ENCODE measurements at regions of chr1 and their contacts with region 1.

Region 1: DNA sequence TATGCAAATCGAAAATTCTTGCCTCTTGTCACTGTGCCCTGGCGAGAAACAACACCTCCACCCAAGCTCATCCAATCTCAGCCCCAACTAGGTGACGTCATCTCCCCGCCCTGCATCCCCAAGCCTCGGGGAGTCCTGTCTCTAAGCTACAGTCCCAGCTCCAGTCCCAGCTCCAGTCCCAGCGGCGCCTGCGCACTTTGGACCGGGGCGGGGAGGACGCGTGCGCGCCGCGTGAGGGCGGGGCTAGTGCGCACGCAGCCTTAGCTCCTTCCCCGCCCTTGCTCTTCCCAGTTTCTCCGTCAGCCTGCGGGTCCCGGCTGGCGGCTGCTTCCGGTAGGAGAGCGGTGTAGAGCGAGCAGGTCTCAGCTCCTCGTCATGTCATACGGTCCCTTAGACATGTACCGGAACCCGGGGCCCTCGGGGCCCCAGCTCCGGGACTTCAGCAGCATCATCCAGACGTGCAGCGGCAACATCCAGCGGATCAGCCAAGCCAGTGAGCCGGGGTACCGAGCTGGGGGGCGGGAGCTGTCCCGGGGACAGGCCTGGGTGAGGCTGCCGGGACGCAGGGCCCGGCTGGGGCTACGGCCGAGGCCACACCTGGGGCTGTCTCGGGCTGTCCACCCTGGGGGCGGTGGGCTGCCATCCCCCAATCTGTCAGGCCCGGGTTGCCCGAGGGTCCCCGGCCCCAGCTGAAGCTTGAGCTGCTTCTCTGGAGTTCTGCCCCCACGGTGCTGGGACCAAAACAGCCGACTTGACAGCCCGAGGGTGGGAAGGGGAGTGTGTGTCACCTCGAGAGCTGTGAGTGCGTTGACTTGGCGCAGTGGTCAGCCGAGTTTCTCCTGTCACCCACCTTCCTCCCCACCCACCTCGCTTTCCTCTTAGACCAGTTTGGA is at the start of gene STX12:
- DNase-seq: peak; percentile 100
- ATAC-seq: peak; percentile 97
- H3K4me3 Mint-ChIP-seq: peak within 1 kb of the TSS; percentile 98
- H3K27ac Mint-ChIP-seq: peak within 1 kb of the TSS; percentile 99
- H3K4me1 Mint-ChIP-seq: peaks cover 31% of the 10 kb centered on the region
- H3K27me3 Mint-ChIP-seq: no peaks in the 10 kb centered on the region
- total RNA-seq, gene STX12: 26.8 to 37.4 TPM

Region 2: DNA sequence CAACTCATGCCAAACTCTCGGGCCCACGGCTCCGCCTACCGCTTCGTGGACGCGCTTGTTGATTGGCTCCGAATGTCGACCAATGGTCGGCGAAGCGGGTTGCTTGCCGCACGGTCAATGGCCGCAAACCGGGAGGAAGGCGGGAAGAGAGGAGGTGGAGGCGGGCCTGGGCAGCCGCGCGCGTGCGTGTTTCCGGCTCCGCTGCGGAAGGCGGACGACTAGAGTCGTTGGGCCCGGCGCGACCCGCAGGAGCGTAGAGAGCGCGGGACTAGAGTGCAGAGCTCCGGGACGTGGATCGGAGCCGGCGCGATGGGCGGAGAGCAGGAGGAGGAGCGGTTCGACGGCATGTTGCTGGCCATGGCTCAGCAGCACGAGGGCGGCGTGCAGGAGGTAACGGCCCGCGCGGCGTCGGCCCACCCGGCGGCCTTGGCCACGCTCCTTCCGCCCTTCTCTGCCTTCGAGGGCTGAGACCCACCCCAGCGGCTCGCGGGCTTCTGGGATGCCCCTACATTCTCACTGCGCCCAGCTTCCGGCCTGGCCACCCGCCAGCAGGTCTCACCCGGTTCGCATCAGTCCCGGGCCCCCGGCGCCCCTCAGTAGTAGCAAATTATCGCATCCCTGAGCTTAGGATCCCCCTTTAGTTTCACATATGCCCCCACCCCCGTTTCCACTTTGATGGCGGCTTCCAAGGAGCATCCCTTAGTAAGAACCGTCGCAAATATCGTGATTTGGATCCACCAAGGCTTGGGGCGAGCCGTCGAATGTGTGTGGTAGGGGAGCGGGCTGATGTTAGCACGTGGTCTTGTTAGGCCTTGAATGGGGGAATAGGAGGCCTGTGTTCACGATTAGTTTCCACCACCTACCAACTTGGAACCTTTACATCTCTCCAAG is 851.4 kb before region 1 on chr1 and contains the start of gene NUDC:
- CTCF ChIA-PET with region 1: no interaction called
- POLR2A ChIA-PET with region 1: no interaction called
- intact Hi-C with region 1: loop called in 1 of 2 experiments (anchors 5 kb)
- DNase-seq: peak; percentile 98
- ATAC-seq: peak; percentile 98
- H3K4me3 Mint-ChIP-seq: peak within 1 kb of the TSS; percentile 82
- H3K27ac Mint-ChIP-seq: peak within 1 kb of the TSS; percentile 90
- H3K4me1 Mint-ChIP-seq: peaks cover 38% of the 10 kb centered on the region
- H3K27me3 Mint-ChIP-seq: no peaks in the 10 kb centered on the region
- total RNA-seq, gene NUDC: 95.9 to 101 TPM

Region 3: GRCh38 chr1:27489910-27490741 is 283.1 kb before region 1 on chr1 and contains the start of gene WASF2:
- CTCF ChIA-PET with region 1: no interaction called
- POLR2A ChIA-PET with region 1: no interaction called
- intact Hi-C with region 1: loop called in 1 of 2 experiments (anchors 2 kb)
- DNase-seq: peak; percentile 98
- ATAC-seq: peak; percentile 96
- H3K4me3 Mint-ChIP-seq: peak within 1 kb of the TSS; percentile 98
- H3K27ac Mint-ChIP-seq: peak within 1 kb of the TSS; percentile 99
- H3K4me1 Mint-ChIP-seq: peaks cover 28% of the 10 kb centered on the region
- H3K27me3 Mint-ChIP-seq: no peaks in the 10 kb centered on the region
- total RNA-seq, gene WASF2: 104 to 132 TPM

Region 4: DNA sequence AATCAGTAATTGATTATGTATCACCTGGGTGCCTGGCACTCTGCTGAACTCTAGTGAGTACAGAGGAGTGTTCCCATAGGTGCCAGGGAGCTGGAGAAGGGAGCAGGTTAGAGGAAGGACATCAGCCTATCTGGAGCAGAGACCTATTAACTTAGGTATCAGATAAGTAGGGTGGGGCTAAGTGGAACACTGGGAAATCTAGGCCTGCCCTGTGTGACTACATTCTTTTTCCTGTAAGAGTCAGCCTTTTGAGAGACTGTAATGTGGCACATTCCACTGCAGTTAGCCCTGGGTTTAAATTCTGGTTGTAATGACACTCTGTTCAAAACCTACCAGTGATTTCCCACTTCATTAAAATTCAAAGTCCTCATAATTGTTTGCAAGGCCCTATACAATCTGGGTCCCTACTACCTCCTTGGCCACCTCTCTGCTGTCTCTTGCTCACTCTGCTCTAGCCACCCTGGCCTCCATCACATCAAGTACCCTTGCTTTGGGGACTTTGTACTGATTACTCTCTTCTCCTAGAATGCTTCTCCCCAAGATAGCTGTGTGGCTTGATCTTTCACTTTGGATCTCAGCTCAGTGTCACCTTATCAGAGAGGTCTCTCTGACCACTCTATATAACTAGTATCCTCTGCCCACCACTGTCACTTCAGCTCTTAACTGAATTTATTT is 12.7 kb after region 1 on chr1:
- CTCF ChIA-PET with region 1: interaction called, 11 read pairs
- POLR2A ChIA-PET with region 1: no interaction called
- intact Hi-C with region 1: no loop called
- DNase-seq: no peak
- ATAC-seq: no peak
- H3K4me3 Mint-ChIP-seq: no peak overlapping the region
- H3K27ac Mint-ChIP-seq: peak overlapping the region; percentile 22
- H3K4me1 Mint-ChIP-seq: peaks cover 9% of the 10 kb centered on the region
- H3K27me3 Mint-ChIP-seq: no peaks in the 10 kb centered on the region

Region 5: GRCh38 chr1:28088168-28088961 is 315.2 kb after region 1 on chr1 and contains the start of gene EYA3:
- CTCF ChIA-PET with region 1: no interaction called
- POLR2A ChIA-PET with region 1: no interaction called
- intact Hi-C with region 1: loop called in 1 of 2 experiments (anchors 1 kb)
- DNase-seq: peak; percentile 99
- ATAC-seq: peak; percentile 93
- H3K4me3 Mint-ChIP-seq: peak within 1 kb of the TSS; percentile 98
- H3K27ac Mint-ChIP-seq: peak within 1 kb of the TSS; percentile 98
- H3K4me1 Mint-ChIP-seq: peaks cover 27% of the 10 kb centered on the region
- H3K27me3 Mint-ChIP-seq: no peaks in the 10 kb centered on the region
- total RNA-seq, gene EYA3: 30.1 to 37.1 TPM

Region 6: GRCh38 chr1:28552758-28553663 is 779.8 kb after region 1 on chr1 and contains the start of gene TRNAU1AP:
- CTCF ChIA-PET with region 1: interaction called, 3 read pairs
- POLR2A ChIA-PET with region 1: no interaction called
- intact Hi-C with region 1: loop called in 1 of 2 experiments (anchors 2 kb)
- DNase-seq: peak; percentile 99
- ATAC-seq: peak; percentile 94
- H3K4me3 Mint-ChIP-seq: peak within 1 kb of the TSS; percentile 92
- H3K27ac Mint-ChIP-seq: peak within 1 kb of the TSS; percentile 95
- H3K4me1 Mint-ChIP-seq: peaks cover 24% of the 10 kb centered on the region
- H3K27me3 Mint-ChIP-seq: no peaks in the 10 kb centered on the region
- total RNA-seq, gene TRNAU1AP: 50.7 to 60.2 TPM